Caco-2 (cell line): ENCODE measurements at regions of chr9 and their contacts with region 1.

Region 1: GRCh38 chr9:104078596-104078995 is 15.5 kb upstream of the SMC2 start:
- DNase-seq: peak; percentile 64 to 75
- H3K4me3 ChIP-seq: no peak overlapping the region
- H3K4me3 Mint-ChIP-seq: no peak overlapping the region
- H3K27ac Mint-ChIP-seq: peak overlapping the region; percentile 48
- H3K4me1 ChIP-seq: peaks cover 39% of the 10 kb centered on the region
- H3K4me1 Mint-ChIP-seq: no peaks in the 10 kb centered on the region
- H3K27me3 ChIP-seq: no peaks in the 10 kb centered on the region
- H3K27me3 Mint-ChIP-seq: no peaks in the 10 kb centered on the region
- CTCF ChIP-seq: no peak

Region 2: DNA sequence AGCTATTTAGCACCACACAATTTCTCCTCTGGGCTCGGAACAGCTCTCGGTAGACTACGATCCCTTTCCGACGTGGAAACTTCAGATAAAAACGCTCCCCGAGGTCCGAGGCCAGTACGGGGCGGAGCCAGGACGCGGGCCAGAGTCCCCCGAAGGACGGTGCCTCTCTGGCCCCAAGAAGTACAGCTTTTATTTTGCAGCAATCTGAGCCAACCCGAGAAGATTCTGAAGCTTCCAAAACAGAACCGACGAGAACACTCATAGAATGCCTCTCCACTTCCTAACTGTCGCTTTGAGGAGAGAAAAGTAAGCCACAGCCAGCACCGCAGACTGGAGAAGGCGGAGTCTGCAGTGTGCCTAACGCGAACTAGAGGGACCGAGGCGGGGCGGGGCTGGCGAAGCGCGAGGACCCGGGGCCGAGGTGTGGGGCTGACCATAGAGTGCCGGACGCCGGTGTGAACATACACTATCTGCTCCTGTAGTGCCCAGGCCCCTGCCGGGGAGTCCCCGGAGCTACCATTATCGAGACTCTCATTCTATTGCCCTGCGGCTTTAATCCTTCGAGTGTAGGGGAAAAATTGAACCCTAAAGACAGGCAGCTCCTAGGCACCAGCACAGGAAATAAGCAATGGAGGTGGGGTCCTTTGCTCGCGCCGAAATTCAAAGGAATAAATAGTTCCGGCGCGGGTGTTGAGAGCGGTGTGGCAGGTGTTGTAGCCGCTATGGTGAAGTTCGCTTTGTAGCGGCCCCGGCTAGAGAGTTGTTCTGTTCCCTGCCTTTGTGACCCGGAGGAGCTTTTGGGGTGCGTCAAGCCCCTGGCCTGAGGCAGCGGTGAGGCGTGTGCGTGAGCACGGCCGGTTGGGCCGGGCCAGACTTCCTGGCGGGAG is 15.3 kb after region 1 on chr9 and contains the start of gene SMC2:
- CTCF ChIA-PET with region 1: no interaction called
- POLR2A ChIA-PET with region 1: interaction called, 3 read pairs
- intact Hi-C with region 1: loop called (anchors 1 kb)
- DNase-seq: peak; percentile 92 to 95
- H3K4me3 ChIP-seq: peak within 1 kb of the TSS; percentile 71
- H3K4me3 Mint-ChIP-seq: peak within 1 kb of the TSS; percentile 86
- H3K27ac Mint-ChIP-seq: peak within 1 kb of the TSS; percentile 99
- H3K4me1 ChIP-seq: peaks cover 16% of the 10 kb centered on the region
- H3K4me1 Mint-ChIP-seq: no peaks in the 10 kb centered on the region
- H3K27me3 ChIP-seq: no peaks in the 10 kb centered on the region
- H3K27me3 Mint-ChIP-seq: no peaks in the 10 kb centered on the region
- CTCF ChIP-seq: no peak
- total RNA-seq, gene SMC2: 36.4 and 37.4 TPM in 2 replicates

Region 3: DNA sequence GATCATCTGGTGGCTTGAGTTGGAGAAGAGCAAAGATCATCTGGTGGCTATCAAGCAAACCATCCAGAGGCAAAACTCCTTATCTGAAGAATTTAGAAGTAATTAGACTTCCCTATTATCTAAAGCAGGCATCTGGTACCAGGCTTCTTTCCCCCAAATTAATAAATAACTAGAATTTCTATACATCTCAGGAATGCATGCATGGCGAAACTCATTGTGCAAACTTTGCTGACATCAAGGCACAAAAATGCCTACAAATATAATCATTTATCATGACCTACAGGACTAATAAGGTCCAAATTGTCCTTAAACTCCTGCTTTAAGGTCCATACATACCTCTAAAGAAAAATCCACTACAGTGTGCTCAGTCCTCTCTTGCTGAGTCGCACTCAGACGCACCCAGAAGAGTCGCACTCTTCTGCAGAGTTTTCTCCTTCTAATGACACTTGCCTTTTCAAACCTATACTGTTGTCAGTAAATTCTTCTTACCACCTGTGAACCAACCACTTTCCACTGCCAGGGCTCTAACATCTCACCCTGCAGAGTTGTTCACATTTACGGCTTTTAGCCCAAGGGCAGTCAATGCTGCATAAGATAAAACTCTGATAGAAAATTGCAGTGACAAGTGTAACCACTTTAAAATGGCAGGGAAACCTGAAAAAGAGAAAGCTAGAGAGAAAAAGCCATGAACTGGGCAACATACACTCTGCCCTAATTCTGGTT is 621.9 kb after region 1 on chr9:
- CTCF ChIA-PET with region 1: no interaction called
- POLR2A ChIA-PET with region 1: no interaction called
- intact Hi-C with region 1: loop called (anchors 1 kb)
- DNase-seq: peak; percentile 64
- H3K4me3 ChIP-seq: no peak overlapping the region
- H3K4me3 Mint-ChIP-seq: peak overlapping the region; percentile 32
- H3K27ac Mint-ChIP-seq: peak overlapping the region; percentile 75
- H3K4me1 ChIP-seq: peaks cover 43% of the 10 kb centered on the region
- H3K4me1 Mint-ChIP-seq: peaks cover 27% of the 10 kb centered on the region
- H3K27me3 ChIP-seq: no peaks in the 10 kb centered on the region
- H3K27me3 Mint-ChIP-seq: no peaks in the 10 kb centered on the region
- CTCF ChIP-seq: no peak